ENCODE measurements at regions of chr2 and their contacts with region 1.

Region 1: DNA sequence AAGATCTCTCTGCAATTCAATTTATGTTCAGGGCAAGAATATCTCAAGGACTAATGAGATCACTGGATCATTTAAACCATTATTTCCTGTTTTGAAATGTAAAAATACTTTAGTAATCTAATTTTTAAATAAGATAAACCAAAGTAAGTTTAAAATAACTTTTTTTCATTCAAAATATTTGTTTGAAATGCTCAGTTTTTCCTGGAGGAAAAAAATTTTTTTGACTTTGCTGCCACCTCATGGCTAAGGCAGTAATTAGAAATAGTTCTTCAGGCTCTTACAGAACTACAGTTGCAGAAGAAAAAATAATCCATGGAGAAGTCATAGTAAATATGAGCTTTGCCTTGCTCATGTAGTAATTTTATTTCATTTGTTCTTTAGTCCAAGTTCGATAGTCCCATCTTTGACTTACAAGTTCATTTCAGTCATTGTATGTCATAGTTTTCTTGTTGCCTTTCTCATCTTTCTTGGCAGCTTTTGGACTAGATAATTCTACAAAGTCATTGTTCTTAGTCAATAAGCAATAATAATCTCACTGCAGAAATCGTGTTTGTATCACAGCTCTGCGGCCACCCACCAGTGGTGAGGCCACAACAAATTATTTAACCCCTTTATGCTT is 127.4 kb downstream of the DPP4 start:
- H3K4me3 Mint-ChIP-seq: no peak overlapping the region
- H3K27ac Mint-ChIP-seq: no peak overlapping the region
- H3K4me1 Mint-ChIP-seq: no peaks in the 10 kb centered on the region
- H3K27me3 Mint-ChIP-seq: peaks cover 2% of the 10 kb centered on the region

Region 2: GRCh38 chr2:161250864-161251436 is 695.6 kb before region 1 on chr2:
- intact Hi-C with region 1: loop called (anchors 10 kb)
- H3K4me3 Mint-ChIP-seq: no peak overlapping the region
- H3K27ac Mint-ChIP-seq: no peak overlapping the region
- H3K4me1 Mint-ChIP-seq: no peaks in the 10 kb centered on the region
- H3K27me3 Mint-ChIP-seq: peaks cover 11% of the 10 kb centered on the region

Region 3: DNA sequence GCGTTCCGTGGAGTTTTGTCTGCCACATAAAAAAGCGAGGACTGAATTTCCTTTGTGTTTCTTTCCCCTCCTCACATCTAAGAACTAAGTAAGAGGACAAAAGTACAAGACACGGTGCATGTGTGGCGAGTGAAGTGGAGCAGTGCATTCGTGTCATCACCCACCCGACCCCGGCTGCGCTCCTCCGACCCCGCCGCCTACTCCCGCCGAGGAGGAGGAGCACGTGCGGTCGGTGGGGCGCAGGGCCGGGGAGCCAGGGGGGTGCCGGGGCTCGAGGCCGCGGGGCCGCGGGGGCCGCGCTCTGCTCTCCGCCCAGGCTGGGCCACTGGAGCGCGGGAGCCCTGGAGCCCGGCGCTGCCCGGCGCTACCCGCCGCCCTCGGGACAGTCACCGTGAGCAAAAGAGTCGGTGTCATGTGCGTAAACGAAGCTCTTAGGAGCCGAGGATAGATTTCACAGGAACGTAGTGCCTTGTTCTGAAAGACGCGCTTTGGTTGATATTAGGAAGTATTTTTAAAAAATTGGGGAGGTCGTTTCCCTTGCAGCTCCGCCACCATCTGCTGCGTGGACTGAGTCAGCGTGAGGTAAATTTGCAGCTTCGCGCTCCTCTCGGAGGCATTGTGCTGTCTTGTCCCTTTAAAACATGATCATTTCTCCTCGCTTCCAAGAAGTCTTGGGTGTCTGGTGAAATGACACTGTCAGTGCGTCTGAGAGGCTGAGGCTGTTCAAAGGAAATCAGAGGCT is 519.5 kb before region 1 on chr2:
- intact Hi-C with region 1: loop called (anchors 5 kb)
- H3K4me3 Mint-ChIP-seq: peak overlapping the region; percentile 64
- H3K27ac Mint-ChIP-seq: no peak overlapping the region
- H3K4me1 Mint-ChIP-seq: peaks cover 32% of the 10 kb centered on the region
- H3K27me3 Mint-ChIP-seq: peaks cover 82% of the 10 kb centered on the region